Activated B cell treated with CpG ODN at 0.5 μM for 24 hours (primary cell): ENCODE measurements at regions of chr4 and their contacts with region 1.

Region 1: GRCh38 chr4:41318867-41319535 is 62.3 kb downstream of the UCHL1 start:
- DNase-seq: no peak
- ATAC-seq: no peak
- H3K4me3 Mint-ChIP-seq: no peak overlapping the region
- H3K27ac Mint-ChIP-seq: no peak overlapping the region
- H3K4me1 Mint-ChIP-seq: peaks cover 19% of the 10 kb centered on the region
- H3K27me3 Mint-ChIP-seq: peaks cover 4% of the 10 kb centered on the region
- CTCF ChIP-seq: no peak

Region 2: DNA sequence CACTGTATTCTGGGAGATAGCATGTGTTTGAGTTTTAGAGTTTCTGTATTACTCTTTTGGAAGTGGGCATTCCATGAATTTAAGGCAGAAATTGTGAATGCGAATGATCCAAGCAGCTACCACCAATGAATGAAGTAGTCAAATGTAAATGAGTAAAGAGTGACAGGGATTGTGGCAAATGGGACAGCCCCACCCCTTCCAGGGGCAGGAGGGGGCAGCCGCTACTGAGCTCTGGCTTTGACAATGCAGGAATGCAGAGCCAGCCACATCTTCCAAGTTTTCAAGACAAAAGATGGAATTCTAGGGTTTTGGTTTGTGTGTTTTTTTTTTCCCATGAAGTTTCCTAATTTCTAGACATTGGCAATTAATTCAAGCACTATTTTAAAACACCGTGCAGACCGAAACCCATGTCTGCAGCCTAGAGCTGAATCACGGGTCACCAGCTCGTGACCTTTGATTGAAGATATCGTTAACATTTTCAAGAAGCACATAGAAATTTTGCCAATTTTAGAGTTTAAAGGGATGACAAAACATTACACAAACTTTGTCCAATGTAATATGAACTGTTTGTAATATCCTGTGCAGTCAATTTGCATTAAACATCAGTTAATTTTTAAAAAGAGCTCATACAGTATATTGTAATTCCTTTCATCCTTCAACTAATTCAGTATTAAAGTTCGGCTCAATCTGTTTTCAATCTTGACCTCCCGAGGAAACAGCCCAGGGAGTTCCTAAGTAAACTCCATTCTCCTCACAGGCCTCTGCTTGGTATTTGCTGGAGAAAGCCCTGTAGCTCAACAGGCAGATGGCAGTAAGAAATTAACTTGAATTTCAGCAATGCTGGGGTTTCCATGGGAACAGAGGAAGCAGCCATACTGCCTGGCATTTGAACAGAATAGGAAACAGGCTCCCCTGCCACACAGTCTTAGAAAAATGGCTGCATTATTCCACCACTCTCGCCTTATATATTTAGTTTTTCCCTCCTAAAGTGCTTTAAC is 21.1 kb after region 1 on chr4:
- CTCF ChIA-PET with region 1: no interaction called
- POLR2A ChIA-PET with region 1: interaction called, 10 read pairs
- intact Hi-C with region 1: no loop called
- DNase-seq: no peak
- ATAC-seq: no peak
- H3K4me3 Mint-ChIP-seq: no peak overlapping the region
- H3K27ac Mint-ChIP-seq: no peak overlapping the region
- H3K4me1 Mint-ChIP-seq: no peaks in the 10 kb centered on the region
- H3K27me3 Mint-ChIP-seq: no peaks in the 10 kb centered on the region
- CTCF ChIP-seq: no peak

Region 3: DNA sequence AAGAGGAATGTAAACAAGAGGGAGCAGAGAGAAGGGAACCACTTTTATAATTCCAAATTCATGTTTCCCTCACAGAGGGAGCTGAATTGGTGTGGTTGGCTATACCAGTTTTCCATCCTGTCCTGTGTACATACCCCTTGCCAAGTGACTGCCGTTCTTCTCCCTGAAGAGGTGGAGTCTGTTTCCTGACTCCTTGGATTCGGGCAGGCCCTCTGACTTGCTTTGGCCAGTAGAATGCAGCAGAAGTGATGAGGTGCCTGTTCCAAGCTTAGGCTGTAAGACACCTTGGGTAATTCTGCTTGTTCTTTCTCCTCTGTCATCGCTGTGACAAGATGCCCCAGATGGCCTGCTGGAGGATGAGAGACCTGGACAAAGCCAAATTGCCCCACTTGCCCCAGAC is 62.4 kb after region 1 on chr4:
- CTCF ChIA-PET with region 1: no interaction called
- POLR2A ChIA-PET with region 1: interaction called, 12 read pairs
- intact Hi-C with region 1: no loop called
- DNase-seq: no peak
- ATAC-seq: no peak
- H3K4me3 Mint-ChIP-seq: no peak overlapping the region
- H3K27ac Mint-ChIP-seq: no peak overlapping the region
- H3K4me1 Mint-ChIP-seq: no peaks in the 10 kb centered on the region
- H3K27me3 Mint-ChIP-seq: no peaks in the 10 kb centered on the region
- CTCF ChIP-seq: no peak

Region 4: DNA sequence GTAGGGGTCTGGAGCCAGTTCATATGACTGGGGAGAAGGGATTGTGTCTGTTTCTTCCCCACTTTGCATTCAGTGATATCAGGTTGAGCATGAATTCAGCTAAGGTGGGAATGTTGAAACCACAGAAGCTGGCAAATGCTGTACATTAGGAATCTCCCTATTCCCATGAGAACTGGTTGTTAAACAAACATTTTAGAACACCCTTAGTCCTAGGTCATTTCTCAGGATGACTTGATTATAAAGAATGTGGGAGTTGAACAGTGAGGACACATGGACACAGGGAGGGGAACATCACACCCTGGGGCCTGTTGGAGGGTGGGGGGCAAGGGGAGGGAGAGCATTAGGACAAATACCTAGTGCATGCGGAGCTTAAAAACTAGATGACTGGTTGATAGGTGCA is 156.4 kb after region 1 on chr4:
- CTCF ChIA-PET with region 1: no interaction called
- POLR2A ChIA-PET with region 1: no interaction called
- intact Hi-C with region 1: no loop called
- DNase-seq: no peak
- ATAC-seq: no peak
- H3K4me3 Mint-ChIP-seq: no peak overlapping the region
- H3K27ac Mint-ChIP-seq: no peak overlapping the region
- H3K4me1 Mint-ChIP-seq: no peaks in the 10 kb centered on the region
- H3K27me3 Mint-ChIP-seq: no peaks in the 10 kb centered on the region
- CTCF ChIP-seq: no peak